ENCODE measurements at regions of chr17 and their contacts with region 1.

Region 1: DNA sequence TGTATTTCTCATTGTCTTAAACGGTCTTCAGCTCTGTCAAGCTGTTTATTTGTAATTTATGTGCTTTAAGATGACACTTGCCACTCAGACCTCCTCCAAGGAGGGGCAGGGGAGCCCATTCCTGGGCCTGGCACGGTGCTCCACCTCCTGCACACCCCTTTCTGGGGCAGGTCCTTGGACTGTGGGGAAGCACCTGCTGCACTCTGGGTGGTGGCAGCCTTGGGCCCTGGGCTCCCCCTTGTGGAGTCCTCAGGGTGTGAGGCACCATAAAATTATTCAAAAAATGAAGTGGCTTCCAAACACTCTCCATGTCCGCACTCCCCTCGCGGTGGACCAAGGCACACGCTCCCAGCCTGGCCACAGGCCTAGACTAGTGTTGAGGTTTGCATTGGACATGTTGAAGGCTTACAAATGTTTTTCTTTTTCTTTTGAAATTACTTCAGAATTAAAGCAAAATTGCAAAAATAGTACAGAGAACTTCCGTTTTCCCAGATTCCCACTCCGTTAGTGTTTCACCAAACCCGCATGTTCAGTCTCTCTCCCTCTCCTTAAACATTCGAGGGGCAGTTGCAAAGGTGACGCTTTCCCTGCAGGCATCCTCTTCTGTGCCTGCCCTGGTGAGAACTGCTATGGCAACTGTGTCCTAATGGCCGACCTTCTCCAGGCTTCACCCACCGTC is 32.4 kb downstream of the FOXK2 start:
- DNase-seq: peak; percentile 91
- CTCF ChIP-seq: peak; percentile 78

Region 2: GRCh38 chr17:82494236-82495055 is 57.5 kb before region 1 on chr17:
- CTCF ChIA-PET with region 1: interaction called, 14 read pairs
- POLR2A ChIA-PET with region 1: interaction called, 5 read pairs
- DNase-seq: peak; percentile 90
- CTCF ChIP-seq: peak; percentile 94

Region 3: DNA sequence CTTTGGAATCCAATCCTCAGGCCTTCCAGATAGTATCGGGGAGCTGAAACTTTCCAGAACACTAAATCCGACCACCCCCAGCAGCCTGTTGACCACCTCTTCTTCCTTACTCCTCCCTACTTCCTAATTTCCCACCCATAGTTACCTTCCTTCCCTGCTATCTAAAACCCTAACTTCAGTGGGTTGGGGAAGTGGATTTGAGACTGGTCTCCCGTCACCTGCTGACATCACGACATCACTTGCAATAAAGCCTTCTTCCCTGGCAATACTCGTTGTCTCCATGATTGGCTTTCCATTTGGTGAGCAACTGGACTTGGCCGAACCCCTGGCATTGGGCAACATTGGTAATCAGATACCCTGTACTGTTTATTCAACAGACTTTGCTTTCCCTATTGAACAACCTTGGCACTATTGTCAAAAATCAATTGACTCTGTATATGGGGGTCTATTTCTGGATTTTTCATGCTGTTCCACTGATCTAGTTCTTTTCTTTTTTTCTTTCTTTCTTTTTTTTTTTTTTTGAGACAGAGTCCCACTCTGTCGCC is 44.2 kb before region 1 on chr17:
- CTCF ChIA-PET with region 1: interaction called, 13 read pairs
- POLR2A ChIA-PET with region 1: no interaction called
- DNase-seq: no peak
- CTCF ChIP-seq: no peak

Region 4: DNA sequence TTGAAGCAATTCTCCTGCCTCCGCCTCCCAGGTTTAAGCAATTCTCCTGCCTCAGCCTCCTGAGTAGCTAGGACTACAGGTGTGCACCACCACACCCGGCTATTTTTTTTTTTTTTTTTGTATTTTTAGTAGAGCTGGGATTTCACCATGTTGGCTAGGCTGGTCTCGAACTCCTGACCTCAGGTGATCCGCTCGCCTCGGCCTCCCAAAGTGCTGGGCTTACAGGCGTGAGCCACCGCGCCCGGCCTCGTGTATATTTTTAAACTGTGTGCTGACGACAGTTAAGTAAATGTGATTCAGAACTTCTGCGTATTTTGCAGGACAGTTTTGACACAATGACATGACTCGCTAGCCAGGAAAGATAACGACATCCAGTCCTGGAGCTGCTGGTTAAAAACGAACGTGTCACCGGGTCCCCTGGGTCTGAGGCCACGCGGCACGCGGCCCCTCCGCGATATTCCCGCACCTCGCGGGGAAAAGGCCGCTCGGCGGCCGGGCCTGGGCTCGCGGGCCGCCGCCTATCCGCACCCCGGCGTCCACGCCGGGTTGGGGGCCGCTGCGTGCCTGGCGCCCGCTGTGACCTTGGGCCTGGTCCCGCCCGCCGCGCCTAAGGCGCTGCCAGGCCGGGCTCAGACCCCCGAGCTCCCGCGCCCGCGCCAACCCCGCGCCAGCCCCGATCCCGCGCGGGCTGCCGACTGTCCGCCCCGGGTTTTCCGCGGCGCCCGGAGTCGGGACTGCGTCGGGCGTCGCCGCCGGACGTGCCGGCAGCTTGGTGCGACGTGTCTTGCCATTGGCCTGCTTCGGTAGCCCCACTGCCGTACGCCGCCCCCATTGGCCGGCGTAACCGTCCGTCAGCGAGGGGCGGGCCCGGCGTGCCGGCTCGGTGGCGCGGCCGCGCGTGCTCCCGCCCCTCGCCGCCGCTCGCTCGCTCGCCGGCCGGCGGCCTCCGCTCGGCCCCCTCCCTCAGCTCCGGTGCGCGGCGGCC is 32.8 kb before region 1 on chr17 and contains the start of gene FOXK2:
- CTCF ChIA-PET with region 1: interaction called, 19 read pairs
- POLR2A ChIA-PET with region 1: no interaction called
- DNase-seq: peak; percentile 100
- CTCF ChIP-seq: no peak

Region 5: GRCh38 chr17:82536512-82537201 is 15.3 kb before region 1 on chr17:
- CTCF ChIA-PET with region 1: interaction called, 65 read pairs
- POLR2A ChIA-PET with region 1: no interaction called
- DNase-seq: no peak
- CTCF ChIP-seq: no peak

Region 6: GRCh38 chr17:82563318-82563717 is 11.4 kb after region 1 on chr17:
- CTCF ChIA-PET with region 1: interaction called, 10 read pairs
- POLR2A ChIA-PET with region 1: no interaction called
- DNase-seq: no peak
- CTCF ChIP-seq: no peak

Region 7: DNA sequence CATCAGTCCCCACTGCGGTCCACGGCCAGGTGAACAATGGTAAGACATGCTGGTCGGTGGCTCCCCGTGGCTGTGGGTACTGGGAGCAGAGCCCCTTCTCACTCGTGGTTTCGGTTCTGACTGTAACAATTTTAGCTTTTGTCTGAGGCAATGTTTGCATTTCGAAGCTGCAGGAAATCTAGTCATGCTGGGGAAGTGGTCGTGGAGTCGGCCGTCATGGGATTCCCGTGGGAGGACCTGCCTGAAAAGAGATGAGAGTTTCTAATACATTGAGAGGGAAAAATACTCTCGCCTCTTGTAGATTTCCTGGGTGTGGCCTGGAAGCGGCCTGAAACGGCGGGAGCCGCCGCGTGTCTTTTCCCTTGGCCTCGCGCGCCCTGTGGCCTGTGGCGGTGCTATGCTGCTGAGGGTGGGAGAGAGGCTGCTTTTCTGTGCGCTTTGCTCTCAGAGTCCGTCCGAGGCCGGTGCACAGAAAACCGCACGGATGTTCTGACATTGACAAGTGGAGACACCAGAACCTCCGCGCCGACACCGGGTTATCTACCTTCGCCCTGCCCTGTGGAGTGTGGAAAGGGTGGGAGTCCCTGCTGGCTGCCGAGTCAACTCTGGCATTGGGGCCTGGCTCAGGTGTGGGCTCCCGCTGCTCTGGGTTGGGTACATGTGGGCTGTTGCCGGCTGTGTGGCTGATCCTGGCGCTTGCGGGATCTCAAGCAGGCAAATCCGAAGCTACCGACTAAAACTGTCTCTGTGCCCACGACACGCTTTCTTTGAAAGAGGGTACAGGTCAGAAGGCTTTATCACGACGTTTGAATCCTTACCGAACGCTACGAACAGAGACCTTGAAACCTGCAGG is 35.5 kb after region 1 on chr17:
- CTCF ChIA-PET with region 1: no interaction called
- POLR2A ChIA-PET with region 1: no interaction called
- DNase-seq: no peak
- CTCF ChIP-seq: no peak

Measured in GM10248 (cell line).